ENCODE measurements at regions of chr14 and their contacts with region 1.

Region 1: DNA sequence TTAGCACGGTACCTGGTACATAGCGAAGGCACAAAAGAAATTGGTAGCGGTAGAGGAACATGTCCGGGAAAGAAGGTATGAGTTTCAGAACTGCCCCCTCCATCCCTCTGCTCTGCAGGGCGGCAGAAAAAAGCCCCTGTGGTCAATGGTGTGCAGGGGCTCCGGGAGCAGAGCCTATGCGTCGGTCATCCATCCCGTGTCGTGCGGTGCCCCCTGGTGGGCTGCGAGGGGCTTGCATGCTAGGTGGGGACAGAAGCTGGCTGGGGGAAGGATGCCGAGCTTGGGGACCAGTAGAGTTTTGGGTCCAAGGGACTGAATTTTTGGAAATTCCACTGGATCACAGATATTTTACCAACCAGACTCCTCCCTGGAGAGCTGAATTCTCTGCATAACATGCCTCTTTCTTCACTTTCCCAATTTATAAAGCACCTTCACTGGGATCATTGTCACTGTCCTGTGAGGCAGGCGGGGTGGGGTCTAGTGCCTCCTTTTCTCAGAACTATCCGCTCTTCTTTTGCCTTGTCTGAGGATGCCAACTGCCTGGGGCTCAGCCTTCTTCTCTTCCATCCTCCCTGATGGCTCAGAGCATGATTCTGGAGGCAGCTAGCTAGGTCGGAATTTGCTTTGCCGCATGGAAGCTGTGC is 148.7 kb downstream of the SMOC1 start:
- DNase-seq: peak; percentile 54
- H3K4me3 ChIP-seq: no peak overlapping the region
- H3K27ac ChIP-seq: no peak overlapping the region
- H3K4me1 ChIP-seq: no peaks in the 10 kb centered on the region
- CTCF ChIP-seq: peak; percentile 89

Region 2: DNA sequence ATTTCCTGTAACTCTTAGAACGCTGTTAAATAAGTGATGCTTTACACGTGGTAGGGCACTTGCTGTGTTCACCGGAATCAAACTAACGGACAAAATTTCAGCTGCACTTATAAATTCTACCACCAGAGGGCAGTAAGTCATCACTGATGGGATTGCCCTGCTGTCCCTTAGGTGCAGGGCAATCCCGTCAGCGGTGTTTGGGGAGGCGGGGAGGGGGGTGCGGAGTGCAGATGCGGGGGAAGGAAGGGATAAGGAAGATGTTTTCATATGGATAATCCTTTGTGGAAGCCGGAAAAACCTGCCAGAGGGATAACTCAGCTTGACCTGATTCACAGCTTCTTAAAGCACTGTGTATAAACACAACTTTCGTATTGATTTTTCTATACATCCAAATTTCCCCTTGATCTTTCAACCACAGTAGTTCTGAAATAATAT is 209.1 kb before region 1 on chr14:
- CTCF ChIA-PET with region 1: interaction called, 5 read pairs
- POLR2A ChIA-PET with region 1: no interaction called
- intact Hi-C with region 1: loop called (anchors 1 kb)
- DNase-seq: peak; percentile 78
- H3K4me3 ChIP-seq: no peak overlapping the region
- H3K27ac ChIP-seq: no peak overlapping the region
- H3K4me1 ChIP-seq: no peaks in the 10 kb centered on the region
- CTCF ChIP-seq: peak; percentile 97

Measured in OCI-LY7 (cell line).